Activated CD4-positive, alpha-beta memory T cell treated with anti-CD3 and anti-CD28 coated beads for 36 hours (primary cell): ENCODE measurements at regions of chr3 and their contacts with region 1.

Region 1: GRCh38 chr3:106333911-106334618 is 465.3 kb upstream of the CBLB start:
- DNase-seq: peak; percentile 81
- H3K4me3 Mint-ChIP-seq: peak overlapping the region; percentile 49
- H3K27ac Mint-ChIP-seq: peak overlapping the region; percentile 87
- H3K4me1 Mint-ChIP-seq: peaks cover 80% of the 10 kb centered on the region
- H3K27me3 Mint-ChIP-seq: no peaks in the 10 kb centered on the region

Region 2: GRCh38 chr3:105752744-105753415 is 581.2 kb before region 1 on chr3:
- CTCF ChIA-PET with region 1: no interaction called
- POLR2A ChIA-PET with region 1: no interaction called
- intact Hi-C with region 1: loop called (anchors 2 kb)
- DNase-seq: peak; percentile 41
- H3K4me3 Mint-ChIP-seq: peak overlapping the region; percentile 21
- H3K27ac Mint-ChIP-seq: peak overlapping the region; percentile 87
- H3K4me1 Mint-ChIP-seq: peaks cover 75% of the 10 kb centered on the region
- H3K27me3 Mint-ChIP-seq: no peaks in the 10 kb centered on the region

Region 3: GRCh38 chr3:106119614-106120082 is 214.4 kb before region 1 on chr3:
- CTCF ChIA-PET with region 1: no interaction called
- POLR2A ChIA-PET with region 1: no interaction called
- intact Hi-C with region 1: loop called (anchors 1 kb)
- DNase-seq: peak; percentile 42
- H3K4me3 Mint-ChIP-seq: no peak overlapping the region
- H3K27ac Mint-ChIP-seq: peak overlapping the region; percentile 50
- H3K4me1 Mint-ChIP-seq: peaks cover 21% of the 10 kb centered on the region
- H3K27me3 Mint-ChIP-seq: no peaks in the 10 kb centered on the region

Region 4: DNA sequence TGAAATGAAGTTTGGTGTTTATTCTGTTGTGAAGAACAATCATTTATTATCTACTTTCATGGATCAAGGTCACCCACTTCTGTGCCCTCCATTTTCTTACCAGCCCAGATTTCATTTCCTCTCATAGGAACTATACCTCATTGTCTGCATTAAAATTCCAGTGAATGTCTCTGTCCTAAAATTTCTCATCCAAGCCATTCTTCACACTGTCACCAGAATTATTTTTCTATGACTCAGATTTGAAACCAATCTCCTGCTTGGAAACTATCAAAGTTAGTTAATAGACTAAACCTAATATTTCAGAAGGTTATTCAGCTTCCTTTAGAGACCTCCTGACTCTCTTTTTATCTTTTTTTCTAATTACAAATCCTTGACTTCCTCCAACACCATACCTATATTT is 101.1 kb before region 1 on chr3:
- CTCF ChIA-PET with region 1: no interaction called
- POLR2A ChIA-PET with region 1: interaction called, 5 read pairs
- intact Hi-C with region 1: loop called (anchors 1 kb)
- DNase-seq: no peak
- H3K4me3 Mint-ChIP-seq: no peak overlapping the region
- H3K27ac Mint-ChIP-seq: no peak overlapping the region
- H3K4me1 Mint-ChIP-seq: peaks cover 42% of the 10 kb centered on the region
- H3K27me3 Mint-ChIP-seq: no peaks in the 10 kb centered on the region

Region 5: DNA sequence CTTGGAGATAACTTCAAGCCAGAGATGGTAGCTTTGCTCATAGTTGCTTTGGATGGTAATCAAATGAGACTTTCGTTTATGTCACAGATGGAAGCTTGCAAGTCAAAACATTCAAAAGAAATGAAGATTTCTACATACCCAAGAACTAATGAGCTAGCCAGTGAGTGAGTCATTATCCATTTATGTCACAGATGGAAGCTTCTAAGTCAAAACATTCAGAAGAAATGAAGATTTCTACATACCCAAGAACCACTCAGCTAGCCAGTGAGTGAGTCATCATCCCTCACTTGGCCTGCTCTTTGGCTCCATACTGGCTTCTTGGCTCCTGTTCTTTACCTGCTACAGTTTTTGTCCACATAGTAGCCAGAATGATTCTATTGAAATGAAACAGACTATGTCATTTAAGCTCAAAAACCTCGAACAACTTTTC is 94.5 kb after region 1 on chr3:
- CTCF ChIA-PET with region 1: interaction called, 3 read pairs
- POLR2A ChIA-PET with region 1: interaction called, 25 read pairs
- intact Hi-C with region 1: loop called (anchors 1 kb)
- DNase-seq: peak; percentile 72
- H3K4me3 Mint-ChIP-seq: no peak overlapping the region
- H3K27ac Mint-ChIP-seq: peak overlapping the region; percentile 99
- H3K4me1 Mint-ChIP-seq: peaks cover 53% of the 10 kb centered on the region
- H3K27me3 Mint-ChIP-seq: no peaks in the 10 kb centered on the region

Region 6: DNA sequence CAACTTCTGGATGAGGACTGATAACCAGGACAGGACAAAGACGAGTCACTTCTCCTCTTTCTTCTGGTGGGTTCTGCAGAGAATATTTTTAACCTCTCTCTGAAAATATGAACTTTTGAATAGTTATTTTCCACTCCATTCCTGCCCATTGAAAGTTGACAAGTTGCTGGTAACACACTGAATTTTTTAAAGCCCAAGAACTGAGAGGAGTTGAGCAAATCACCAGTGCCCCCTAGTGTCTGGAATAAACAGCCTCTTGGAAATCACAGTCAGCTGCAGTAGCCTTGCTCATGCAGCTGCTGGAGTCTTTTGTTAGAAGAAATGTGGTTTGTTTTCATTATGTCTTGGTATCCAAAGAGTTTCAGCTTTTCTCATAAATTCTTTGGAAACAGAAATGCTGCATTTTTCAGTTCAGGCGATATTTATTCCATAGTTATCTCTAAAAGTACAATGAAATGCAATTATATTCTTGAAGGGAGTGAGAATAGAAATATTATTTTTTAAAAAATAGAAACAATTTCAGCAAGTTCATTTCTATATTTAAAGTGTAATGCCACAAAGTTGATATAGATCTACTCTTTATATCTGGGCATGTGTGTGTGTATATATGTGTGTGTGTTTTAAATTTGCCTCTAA is 275.7 kb after region 1 on chr3:
- CTCF ChIA-PET with region 1: interaction called, 14 read pairs
- POLR2A ChIA-PET with region 1: no interaction called
- intact Hi-C with region 1: loop called (anchors 1 kb)
- DNase-seq: peak; percentile 76
- H3K4me3 Mint-ChIP-seq: no peak overlapping the region
- H3K27ac Mint-ChIP-seq: peak overlapping the region; percentile 67
- H3K4me1 Mint-ChIP-seq: peaks cover 23% of the 10 kb centered on the region
- H3K27me3 Mint-ChIP-seq: no peaks in the 10 kb centered on the region

Region 7: DNA sequence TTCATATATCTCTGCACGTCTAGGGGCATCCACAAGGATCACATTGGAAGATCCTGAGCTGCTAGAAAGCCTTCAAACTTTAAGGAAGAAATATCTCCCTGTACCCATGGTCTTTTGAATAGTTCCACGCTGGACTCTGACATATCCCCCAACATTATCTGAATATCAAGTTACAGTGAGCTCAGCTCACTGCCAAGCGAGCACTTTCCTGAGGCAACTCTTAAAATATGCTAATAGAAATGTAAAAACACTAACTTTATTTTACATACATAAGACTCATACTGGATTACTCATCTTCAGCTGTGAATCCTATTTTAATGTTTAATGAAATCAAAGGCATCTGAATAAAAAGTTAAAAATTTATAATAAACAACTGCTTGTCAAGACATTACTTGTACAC is 623.0 kb after region 1 on chr3:
- CTCF ChIA-PET with region 1: no interaction called
- POLR2A ChIA-PET with region 1: no interaction called
- intact Hi-C with region 1: no loop called
- DNase-seq: no peak
- H3K4me3 Mint-ChIP-seq: no peak overlapping the region
- H3K27ac Mint-ChIP-seq: no peak overlapping the region
- H3K4me1 Mint-ChIP-seq: no peaks in the 10 kb centered on the region
- H3K27me3 Mint-ChIP-seq: no peaks in the 10 kb centered on the region